IMR-90 (cell line): ENCODE measurements at regions of chr11 and their contacts with region 1.

Region 1: DNA sequence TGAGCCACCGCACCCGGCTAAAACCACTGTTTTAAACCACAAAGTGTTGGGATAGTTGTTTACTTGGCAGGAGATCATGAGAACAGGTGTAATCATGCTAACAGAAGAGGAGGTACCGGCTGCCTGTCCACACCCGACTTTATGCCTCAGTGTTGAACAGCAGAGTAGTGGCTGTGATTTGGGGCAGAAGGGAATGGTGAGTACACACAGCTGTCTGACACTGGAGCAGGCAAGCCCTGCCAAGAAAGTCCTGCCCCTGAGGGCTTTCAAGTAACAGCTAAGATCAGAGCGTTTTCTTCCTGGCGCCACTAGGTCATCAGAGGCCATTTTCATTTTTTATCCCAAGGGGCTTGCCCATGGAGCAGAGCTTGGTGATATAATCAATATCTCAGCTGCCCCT is 8.1 kb downstream of the CDKN1C start:
- DNase-seq: no peak
- ATAC-seq: no peak
- H3K4me3 ChIP-seq: no peak overlapping the region
- H3K27ac ChIP-seq: no peak overlapping the region
- H3K4me1 ChIP-seq: no peaks in the 10 kb centered on the region
- H3K27me3 ChIP-seq: peaks cover 12% of the 10 kb centered on the region
- CTCF ChIP-seq: no peak
- POLR2A ChIP-seq: no peak
- RAD21 ChIP-seq: no peak

Region 2: GRCh38 chr11:2574551-2575535 is 302.6 kb before region 1 on chr11:
- CTCF ChIA-PET with region 1: no interaction called
- POLR2A ChIA-PET with region 1: no interaction called
- dilution Hi-C with region 1: no loop called
- in situ Hi-C with region 1: no loop called
- intact Hi-C with region 1: no loop called
- DNase-seq: no peak
- ATAC-seq: no peak
- H3K4me3 ChIP-seq: no peak overlapping the region
- H3K27ac ChIP-seq: no peak overlapping the region
- H3K4me1 ChIP-seq: no peaks in the 10 kb centered on the region
- H3K27me3 ChIP-seq: peaks cover 14% of the 10 kb centered on the region; the same call in 1 of the 2 replicates
- CTCF ChIP-seq: no peak
- POLR2A ChIP-seq: no peak
- RAD21 ChIP-seq: no peak

Region 3: DNA sequence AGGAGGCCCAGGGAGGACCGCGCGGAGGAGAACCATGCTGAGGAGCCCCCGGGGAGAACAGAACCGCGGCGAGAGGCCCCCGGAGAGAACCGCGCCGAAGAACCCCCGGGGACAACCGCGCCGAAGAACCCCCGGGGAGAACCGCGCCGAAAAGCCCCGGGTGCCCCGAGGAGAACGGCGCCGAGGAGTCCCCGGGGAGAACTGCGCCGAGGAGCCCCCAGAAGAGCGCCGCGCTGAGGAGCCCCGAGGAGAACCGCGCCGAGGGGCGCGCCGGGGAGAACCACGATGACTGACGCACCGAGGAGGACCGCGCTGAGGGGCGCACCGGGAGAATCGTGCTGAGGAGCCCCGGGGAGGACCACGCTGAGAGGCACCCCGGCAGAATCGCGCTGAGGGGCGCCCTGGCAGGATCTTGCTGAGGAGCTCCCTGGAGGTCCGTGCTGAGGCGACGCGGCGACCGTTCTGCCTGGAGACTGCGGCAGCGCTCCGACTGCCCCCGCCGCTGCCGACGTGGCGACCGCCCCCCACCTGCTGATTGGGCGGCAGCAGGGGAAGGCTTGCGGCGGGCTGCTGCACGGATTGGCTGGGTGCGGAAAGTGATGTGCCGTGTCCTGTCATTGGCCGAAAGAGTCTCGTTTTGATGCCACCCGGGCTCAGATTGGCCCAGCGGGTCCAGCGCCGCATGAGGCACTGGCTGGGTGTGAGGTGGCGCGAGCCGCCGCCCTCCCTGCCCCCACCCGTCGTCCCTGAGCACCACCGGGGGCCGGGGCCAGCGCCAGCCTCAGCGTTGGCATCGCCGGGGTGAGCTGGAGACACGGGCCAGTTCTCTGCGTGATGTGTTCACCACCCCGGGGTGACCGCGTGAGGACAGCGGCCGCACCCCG is 177.7 kb before region 1 on chr11 and contains the start of gene KCNQ1OT1:
- CTCF ChIA-PET with region 1: no interaction called
- POLR2A ChIA-PET with region 1: no interaction called
- dilution Hi-C with region 1: no loop called
- in situ Hi-C with region 1: loop called (anchors 5 kb)
- intact Hi-C with region 1: no loop called
- DNase-seq: peak; percentile 92
- ATAC-seq: peak; percentile 95
- H3K4me3 ChIP-seq: peak within 1 kb of the TSS; percentile 71
- H3K27ac ChIP-seq: peak within 1 kb of the TSS; percentile 83
- H3K4me1 ChIP-seq: peaks cover 5% of the 10 kb centered on the region
- H3K27me3 ChIP-seq: peaks cover 4% of the 10 kb centered on the region; the same call in 1 of the 2 replicates
- CTCF ChIP-seq: no peak
- POLR2A ChIP-seq: peak; percentile 99
- RAD21 ChIP-seq: no peak
- total RNA-seq, gene KCNQ1OT1: 1.9 and 2.0 TPM in 2 replicates

Region 4: GRCh38 chr11:2930704-2931428 is 53.4 kb after region 1 on chr11:
- CTCF ChIA-PET with region 1: no interaction called
- POLR2A ChIA-PET with region 1: no interaction called
- dilution Hi-C with region 1: no loop called
- in situ Hi-C with region 1: no loop called
- intact Hi-C with region 1: no loop called
- DNase-seq: peak; percentile 23
- ATAC-seq: 0 out of 2 replicates have a peak, but pooled peaks have one; percentile 3
- H3K4me3 ChIP-seq: peak overlapping the region; percentile 92
- H3K27ac ChIP-seq: peak overlapping the region; percentile 53
- H3K4me1 ChIP-seq: peaks cover 16% of the 10 kb centered on the region
- H3K27me3 ChIP-seq: no peaks in the 10 kb centered on the region
- CTCF ChIP-seq: peak; percentile 56
- POLR2A ChIP-seq: no peak
- RAD21 ChIP-seq: peak; percentile 52

Region 5: DNA sequence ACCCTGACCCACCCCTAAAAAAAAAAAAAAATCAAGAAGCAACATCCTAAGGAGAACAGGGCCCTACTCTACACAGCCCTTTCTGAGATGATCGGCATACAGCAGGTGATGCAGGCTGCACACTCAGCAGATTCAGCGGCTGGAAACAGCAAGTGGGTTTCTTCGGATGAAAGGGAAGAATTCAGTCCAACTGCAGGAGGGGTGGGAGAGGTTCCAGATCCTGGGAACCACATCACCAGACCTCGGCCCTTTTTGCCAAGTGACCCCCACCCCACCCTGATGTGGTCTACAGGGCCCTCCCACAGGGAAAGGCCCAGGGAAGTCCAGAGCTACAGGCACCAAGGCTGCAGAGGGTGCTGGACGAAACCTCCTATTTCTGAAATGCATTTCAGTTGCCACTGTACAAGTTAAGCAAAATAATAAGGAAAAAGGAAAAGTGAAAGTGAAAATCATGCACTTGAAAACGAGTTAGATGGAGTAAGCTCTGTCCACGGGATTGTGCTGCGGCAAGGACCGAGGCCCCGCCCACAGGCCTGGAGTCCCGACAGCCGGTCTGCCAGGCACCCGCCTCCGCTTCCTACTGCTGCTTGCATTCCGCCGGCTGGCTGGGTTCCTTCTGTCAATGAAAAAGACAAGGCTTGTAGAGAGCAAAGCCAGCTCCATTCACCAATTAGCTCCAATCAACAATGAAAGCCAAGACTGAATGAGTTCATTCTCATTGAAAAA is 67.7 kb after region 1 on chr11:
- CTCF ChIA-PET with region 1: no interaction called
- POLR2A ChIA-PET with region 1: no interaction called
- dilution Hi-C with region 1: no loop called
- in situ Hi-C with region 1: no loop called
- intact Hi-C with region 1: no loop called
- DNase-seq: peak; percentile 90
- ATAC-seq: peak; percentile 96
- H3K4me3 ChIP-seq: peak overlapping the region; percentile 8; the same call in 1 of the 2 replicates
- H3K27ac ChIP-seq: peak overlapping the region; percentile 83
- H3K4me1 ChIP-seq: peaks cover 7% of the 10 kb centered on the region; the same call in 1 of the 2 replicates
- H3K27me3 ChIP-seq: no peaks in the 10 kb centered on the region
- CTCF ChIP-seq: no peak
- POLR2A ChIP-seq: no peak
- RAD21 ChIP-seq: no peak

Region 6: GRCh38 chr11:3030289-3031070 is 153.0 kb after region 1 on chr11:
- CTCF ChIA-PET with region 1: no interaction called
- POLR2A ChIA-PET with region 1: no interaction called
- dilution Hi-C with region 1: no loop called
- in situ Hi-C with region 1: no loop called
- intact Hi-C with region 1: no loop called
- DNase-seq: no peak
- ATAC-seq: no peak
- H3K4me3 ChIP-seq: no peak overlapping the region
- H3K27ac ChIP-seq: no peak overlapping the region
- H3K4me1 ChIP-seq: no peaks in the 10 kb centered on the region
- H3K27me3 ChIP-seq: no peaks in the 10 kb centered on the region
- CTCF ChIP-seq: no peak
- POLR2A ChIP-seq: no peak
- RAD21 ChIP-seq: no peak